Naive thymus-derived CD4-positive, alpha-beta T cell (primary cell): ENCODE measurements at regions of chr5 and their contacts with region 1.

Region 1: DNA sequence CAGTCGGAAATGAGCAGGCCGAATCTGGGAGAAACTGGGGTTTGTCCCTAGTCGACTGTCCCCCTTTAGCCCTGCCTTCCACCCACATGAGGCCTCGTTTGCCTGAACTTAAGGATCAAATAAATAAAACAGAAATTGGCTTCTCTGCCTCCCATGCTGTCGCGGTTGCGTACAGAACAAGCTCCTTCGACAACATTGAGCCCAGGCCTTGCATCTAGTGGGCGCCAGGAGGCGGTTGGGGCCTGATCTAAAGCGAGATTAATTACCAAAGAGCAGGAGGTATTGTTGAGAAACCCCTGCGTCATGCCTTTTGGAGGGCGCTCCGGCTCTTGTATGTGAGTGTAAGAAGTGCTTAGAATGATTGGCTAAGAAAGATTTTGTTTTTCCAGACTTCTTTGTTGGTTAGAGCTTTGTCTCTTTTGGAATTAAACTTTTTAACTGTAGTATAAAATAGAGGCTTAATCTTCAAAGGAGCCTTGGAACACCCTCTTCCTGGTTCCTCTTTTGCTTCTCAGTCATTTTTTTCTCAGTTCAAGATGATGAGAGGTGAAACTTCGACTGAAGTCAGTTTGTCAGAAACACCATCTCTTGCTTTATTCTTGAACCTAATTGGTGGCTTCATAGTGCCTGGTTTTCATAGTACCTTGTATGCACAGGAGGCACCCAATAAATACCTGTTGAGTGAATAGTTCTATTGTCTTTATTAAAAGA is 827 bp downstream of the ATP6V0E1 start:
- DNase-seq: peak; percentile 47 to 90 (median 82)
- ATAC-seq: peak; percentile 86
- H3K4me3 ChIP-seq: peak overlapping the region; percentile 64
- H3K4me3 Mint-ChIP-seq: peak overlapping the region; percentile 88 to 99 (median 97)
- H3K27ac ChIP-seq: peak overlapping the region; percentile 92
- H3K27ac Mint-ChIP-seq: peak overlapping the region; percentile 92 to 99 (median 98)
- H3K4me1 ChIP-seq: peaks cover 16 to 26% of the 10 kb centered on the region in 2 donors
- H3K4me1 Mint-ChIP-seq: peaks cover 20 to 71% (median 48%) of the 10 kb centered on the region in 7 donors
- H3K27me3 ChIP-seq: no peaks in the 10 kb centered on the region
- H3K27me3 Mint-ChIP-seq: no peaks in the 10 kb centered on the region

Region 2: GRCh38 chr5:173035904-173036707 is 51.7 kb after region 1 on chr5:
- CTCF ChIA-PET with region 1: interaction called, 7 read pairs
- POLR2A ChIA-PET with region 1: interaction called, 23 read pairs
- intact Hi-C with region 1: loop called (anchors 1 to 5 kb)
- DNase-seq: peak in 1 of 9 donors; percentile 35
- ATAC-seq: peak; percentile 26
- H3K4me3 ChIP-seq: peak overlapping the region; percentile 14
- H3K4me3 Mint-ChIP-seq: peak overlapping the region; percentile 78 to 96 (median 85)
- H3K27ac ChIP-seq: peak overlapping the region; percentile 71
- H3K27ac Mint-ChIP-seq: peak overlapping the region; percentile 93 to 99 (median 97)
- H3K4me1 ChIP-seq: peaks cover 17 to 35% of the 10 kb centered on the region in 2 donors
- H3K4me1 Mint-ChIP-seq: peaks cover 29 to 76% (median 66%) of the 10 kb centered on the region in 7 donors
- H3K27me3 ChIP-seq: no peaks in the 10 kb centered on the region
- H3K27me3 Mint-ChIP-seq: no peaks in the 10 kb centered on the region

Region 3: DNA sequence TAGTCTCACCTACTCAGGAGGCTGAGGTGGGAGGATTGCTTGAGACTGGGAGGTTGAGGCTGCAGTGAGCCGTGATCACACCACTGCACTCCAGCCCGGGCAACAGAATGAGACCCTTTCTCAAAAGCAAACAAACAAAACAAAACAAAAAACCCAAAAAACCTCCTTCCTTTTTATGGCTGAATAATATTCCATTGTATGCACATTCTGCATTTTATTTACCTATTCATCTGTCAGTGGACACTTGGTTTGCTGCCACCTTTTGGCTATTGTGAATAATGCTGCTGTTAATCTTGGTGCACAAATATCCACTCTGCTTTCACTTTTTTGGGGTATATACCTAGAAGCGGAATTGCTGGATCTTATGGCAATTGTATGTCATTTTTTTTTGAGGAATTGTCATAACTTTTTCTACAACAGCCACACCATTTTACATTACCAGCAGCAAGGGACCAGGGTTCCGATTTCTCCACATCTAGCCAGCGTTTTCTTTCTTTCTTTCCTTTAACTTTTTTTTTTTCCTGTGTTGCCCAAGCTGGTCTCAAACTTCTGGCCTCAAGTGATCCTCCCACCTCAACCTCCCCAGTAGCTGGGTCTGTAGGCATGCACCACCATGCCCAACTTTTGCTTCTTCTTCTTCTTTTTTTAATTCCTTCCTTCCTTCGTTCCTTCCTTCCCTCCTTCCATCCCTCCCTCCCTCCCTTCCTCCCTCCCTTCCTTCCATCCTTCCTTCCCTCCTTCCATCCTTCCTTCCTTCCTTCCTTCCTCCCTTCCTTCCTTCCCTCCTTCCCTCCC is 220.0 kb after region 1 on chr5:
- CTCF ChIA-PET with region 1: interaction called, 6 read pairs
- POLR2A ChIA-PET with region 1: no interaction called
- intact Hi-C with region 1: loop called (anchors 1 kb)
- DNase-seq: peak in 5 of 9 donors; percentile 12 to 44 (median 23)
- ATAC-seq: peak; percentile 44
- H3K4me3 ChIP-seq: no peak overlapping the region
- H3K4me3 Mint-ChIP-seq: no peak overlapping the region
- H3K27ac ChIP-seq: no peak overlapping the region
- H3K27ac Mint-ChIP-seq: peak overlapping the region in 1 of 9 donors; percentile 2
- H3K4me1 ChIP-seq: no peaks in the 10 kb centered on the region
- H3K4me1 Mint-ChIP-seq: peaks cover 0 to 4% (median 0%) of the 10 kb centered on the region in 7 donors
- H3K27me3 ChIP-seq: peaks cover 0 to 4% of the 10 kb centered on the region in 2 donors
- H3K27me3 Mint-ChIP-seq: peaks cover 23 to 70% (median 50%) of the 10 kb centered on the region in 5 donors